Ovary (tissue), 10 donors: ENCODE measurements at regions of chr11 and their contacts with region 1.

Region 1: DNA sequence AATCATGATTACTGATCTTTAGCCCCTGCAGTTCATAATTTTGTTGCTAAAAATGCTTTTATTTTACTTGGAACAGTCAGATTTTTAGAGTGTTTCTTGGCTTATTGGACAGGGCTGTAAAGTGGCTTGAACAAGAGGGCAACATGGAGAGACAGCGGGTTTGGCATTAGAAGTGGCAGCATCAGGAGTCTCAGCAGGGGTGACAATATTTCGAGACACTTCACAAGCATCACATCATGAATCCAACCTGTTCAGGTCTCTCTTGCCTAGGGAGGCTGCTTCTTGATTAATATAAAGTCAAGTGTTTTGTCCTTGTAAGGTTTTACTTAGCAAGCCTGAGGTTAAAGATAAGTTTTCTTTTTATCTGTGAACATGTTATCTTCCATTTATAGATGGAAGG is 2249.5 kb downstream of the LRRC4C start:
- DNase-seq: no peak
- H3K4me3 ChIP-seq: no peak overlapping the region
- H3K27ac ChIP-seq: no peak overlapping the region
- H3K4me1 ChIP-seq: no peaks in the 10 kb centered on the region
- H3K27me3 ChIP-seq: no peaks in the 10 kb centered on the region
- CTCF ChIP-seq: no peak
- EP300 ChIP-seq: no peak
- POLR2A ChIP-seq: no peak

Region 2: DNA sequence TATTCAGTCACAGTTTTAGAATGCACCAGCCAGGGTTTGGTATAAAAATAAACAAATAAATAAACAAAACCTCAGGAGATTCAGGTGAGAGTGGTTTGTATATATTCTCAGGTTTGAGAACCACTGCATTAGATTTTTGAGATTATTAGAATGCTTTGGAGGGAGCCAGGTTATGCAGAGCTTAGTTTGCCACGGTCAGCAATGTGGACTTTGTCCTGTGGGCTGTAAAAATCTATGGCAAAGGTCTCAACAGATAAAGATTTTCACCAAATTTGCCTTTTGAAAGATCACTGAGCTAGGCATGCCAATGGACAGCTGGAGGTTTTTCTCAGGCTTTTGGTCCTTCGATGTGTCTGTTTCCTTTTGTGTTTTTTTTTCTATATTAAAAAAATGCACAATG is 1961.8 kb before region 1 on chr11:
- intact Hi-C with region 1: loop called in 1 of 4 experiments (anchors 5 kb)
- DNase-seq: no peak
- H3K4me3 ChIP-seq: no peak overlapping the region
- H3K27ac ChIP-seq: no peak overlapping the region
- H3K4me1 ChIP-seq: no peaks in the 10 kb centered on the region
- H3K27me3 ChIP-seq: no peaks in the 10 kb centered on the region
- CTCF ChIP-seq: no peak
- EP300 ChIP-seq: no peak
- POLR2A ChIP-seq: no peak

Region 3: DNA sequence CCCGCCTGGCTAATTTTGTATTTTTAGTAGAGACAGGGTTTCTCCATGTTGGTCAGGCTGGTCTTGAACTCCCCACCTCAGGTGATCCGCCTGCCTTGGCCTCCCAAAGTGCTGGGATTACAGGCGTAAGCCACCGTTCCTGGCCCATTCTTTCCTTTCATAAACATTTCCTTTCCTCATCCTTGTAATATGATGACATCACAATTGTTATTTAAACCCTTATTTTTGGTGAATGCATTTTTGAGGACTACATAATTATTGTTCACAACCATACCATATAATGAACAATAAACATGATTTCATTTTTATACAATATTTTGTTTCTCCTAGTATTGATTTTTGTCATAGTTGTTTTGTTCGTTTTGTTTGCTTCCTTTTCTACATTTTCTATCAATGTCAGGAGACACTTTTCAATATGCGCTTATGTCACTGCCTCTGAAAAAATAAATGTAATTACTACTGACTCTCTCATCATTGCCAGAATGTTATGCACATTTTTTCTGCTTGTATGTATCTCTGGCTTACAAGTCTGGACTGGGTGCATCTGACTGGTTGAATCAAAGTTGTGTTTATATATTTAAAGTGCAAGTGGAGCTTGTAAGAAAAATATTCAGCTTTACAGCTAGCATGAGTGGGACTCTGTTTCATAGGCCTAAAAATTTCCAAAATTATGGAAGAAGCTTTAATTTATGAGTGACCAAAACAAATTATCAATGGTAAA is 325.7 kb before region 1 on chr11:
- intact Hi-C with region 1: loop called in 1 of 4 experiments (anchors 5 kb)
- DNase-seq: no peak
- H3K4me3 ChIP-seq: no peak overlapping the region
- H3K27ac ChIP-seq: no peak overlapping the region
- H3K4me1 ChIP-seq: no peaks in the 10 kb centered on the region
- H3K27me3 ChIP-seq: no peaks in the 10 kb centered on the region
- CTCF ChIP-seq: no peak
- EP300 ChIP-seq: no peak
- POLR2A ChIP-seq: no peak

Region 4: GRCh38 chr11:39078465-39078864 is 131.5 kb before region 1 on chr11:
- intact Hi-C with region 1: no loop called
- DNase-seq: no peak
- H3K4me3 ChIP-seq: no peak overlapping the region
- H3K27ac ChIP-seq: no peak overlapping the region
- H3K4me1 ChIP-seq: no peaks in the 10 kb centered on the region
- H3K27me3 ChIP-seq: peaks cover 3% of the 10 kb centered on the region
- CTCF ChIP-seq: no peak
- EP300 ChIP-seq: no peak
- POLR2A ChIP-seq: no peak